Mammary epithelial cell (primary cell): ENCODE measurements at regions of chr17 and their contacts with region 1.

Region 1: GRCh38 chr17:9079483-9080103 is 58.3 kb downstream of the NTN1 start:
- DNase-seq: no peak
- H3K4me3 ChIP-seq: no peak overlapping the region
- H3K27ac ChIP-seq: no peak overlapping the region
- H3K4me1 ChIP-seq: peaks cover 5% of the 10 kb centered on the region
- H3K27me3 ChIP-seq: no peaks in the 10 kb centered on the region
- CTCF ChIP-seq: no peak

Region 2: DNA sequence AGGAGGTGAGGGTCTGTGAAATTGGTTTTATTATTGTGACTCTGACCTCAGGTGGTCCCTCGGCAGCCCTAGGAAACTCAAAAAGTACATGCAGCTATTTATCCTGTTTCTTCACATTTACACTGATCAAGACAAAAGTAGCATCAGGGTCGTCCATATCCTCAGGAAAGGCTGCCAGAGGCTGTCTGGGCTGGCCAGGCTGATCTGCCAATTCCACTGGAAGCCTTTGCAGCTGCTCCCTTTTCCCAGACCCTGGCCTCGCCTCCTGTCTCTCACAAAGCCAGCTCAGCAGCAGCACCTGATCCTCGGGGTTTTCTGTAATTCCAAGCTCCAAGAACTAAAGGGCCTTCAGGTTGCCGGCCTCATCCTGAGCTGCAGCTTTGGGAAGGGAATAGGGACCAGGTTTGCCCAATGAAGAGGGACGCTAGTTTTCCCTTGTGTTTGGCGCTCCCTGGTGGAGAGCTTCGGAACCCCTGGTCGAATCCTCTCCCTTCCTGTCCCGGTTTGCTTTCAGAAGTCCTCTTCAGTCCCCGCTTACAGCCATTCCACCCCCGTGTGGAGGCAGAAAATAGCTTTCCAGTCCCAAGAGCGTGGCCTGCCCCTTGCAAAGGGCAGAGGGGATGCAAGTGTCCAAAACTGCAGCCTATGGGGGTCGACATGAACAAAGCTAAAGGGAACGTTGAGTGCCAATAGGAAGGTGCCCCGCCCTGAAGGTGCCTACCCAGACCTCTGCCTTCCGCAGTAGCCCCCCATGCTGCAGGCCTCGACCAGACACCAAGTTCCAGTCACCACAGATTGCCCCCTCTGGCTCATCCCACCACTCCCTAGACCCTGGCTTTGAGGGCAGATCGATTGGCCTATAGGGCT is 293.8 kb before region 1 on chr17:
- CTCF ChIA-PET with region 1: no interaction called
- dilution Hi-C with region 1: no loop called
- in situ Hi-C with region 1: no loop called
- intact Hi-C with region 1: no loop called
- DNase-seq: peak; percentile 45
- H3K4me3 ChIP-seq: no peak overlapping the region
- H3K27ac ChIP-seq: no peak overlapping the region
- H3K4me1 ChIP-seq: no peaks in the 10 kb centered on the region
- H3K27me3 ChIP-seq: no peaks in the 10 kb centered on the region
- CTCF ChIP-seq: peak; percentile 83 to 89

Region 3: GRCh38 chr17:9021158-9021991 is 58.2 kb before region 1 on chr17 and contains the start of gene NTN1:
- CTCF ChIA-PET with region 1: no interaction called
- dilution Hi-C with region 1: no loop called
- in situ Hi-C with region 1: no loop called
- intact Hi-C with region 1: no loop called
- DNase-seq: peak; percentile 61
- H3K4me3 ChIP-seq: peak within 1 kb of the TSS; percentile 66 to 75 (median 72)
- H3K27ac ChIP-seq: no peak within 1 kb of the TSS
- H3K4me1 ChIP-seq: peaks cover 20% of the 10 kb centered on the region
- H3K27me3 ChIP-seq: peaks cover 7% of the 10 kb centered on the region
- CTCF ChIP-seq: no peak
- total RNA-seq, gene NTN1: 5.2 to 18.6 TPM

Region 4: GRCh38 chr17:9195961-9196716 is 116.5 kb after region 1 on chr17:
- CTCF ChIA-PET with region 1: no interaction called
- dilution Hi-C with region 1: no loop called
- in situ Hi-C with region 1: loop called in 1 of 2 experiments (anchors 25 kb)
- intact Hi-C with region 1: no loop called
- DNase-seq: no peak
- H3K4me3 ChIP-seq: no peak overlapping the region
- H3K27ac ChIP-seq: no peak overlapping the region
- H3K4me1 ChIP-seq: no peaks in the 10 kb centered on the region
- H3K27me3 ChIP-seq: no peaks in the 10 kb centered on the region
- CTCF ChIP-seq: no peak

Region 5: DNA sequence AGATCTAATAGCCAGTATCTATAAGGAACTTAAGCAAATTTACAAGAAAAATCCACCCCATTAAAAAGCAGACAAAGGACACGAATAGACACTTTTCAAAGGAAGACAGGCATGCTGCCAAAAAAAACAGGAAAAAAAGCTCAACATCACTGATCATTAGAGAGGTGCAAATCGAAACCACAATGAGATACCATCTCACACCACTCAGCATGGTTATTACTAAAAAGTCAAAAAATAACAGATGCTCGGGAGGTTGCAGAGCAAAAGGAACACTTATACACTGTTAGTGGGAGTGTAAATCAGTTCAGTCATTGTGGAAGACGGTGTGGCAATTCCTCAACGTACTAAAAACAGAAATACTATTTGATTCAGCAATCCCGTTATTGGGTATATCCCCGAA is 486.5 kb after region 1 on chr17:
- CTCF ChIA-PET with region 1: no interaction called
- dilution Hi-C with region 1: loop called (anchors 10 kb)
- in situ Hi-C with region 1: no loop called
- intact Hi-C with region 1: no loop called
- DNase-seq: peak; percentile 2
- H3K4me3 ChIP-seq: no peak overlapping the region
- H3K27ac ChIP-seq: no peak overlapping the region
- H3K4me1 ChIP-seq: no peaks in the 10 kb centered on the region
- H3K27me3 ChIP-seq: no peaks in the 10 kb centered on the region
- CTCF ChIP-seq: no peak